Activated naive CD4-positive, alpha-beta T cell treated with anti-CD3 and anti-CD28 coated beads, Interleukin-2, amount 10 ng/mL, durations not matched to agents 7 days and 5 days (primary cell): ENCODE measurements at regions of chr11 and their contacts with region 1.

Region 1: DNA sequence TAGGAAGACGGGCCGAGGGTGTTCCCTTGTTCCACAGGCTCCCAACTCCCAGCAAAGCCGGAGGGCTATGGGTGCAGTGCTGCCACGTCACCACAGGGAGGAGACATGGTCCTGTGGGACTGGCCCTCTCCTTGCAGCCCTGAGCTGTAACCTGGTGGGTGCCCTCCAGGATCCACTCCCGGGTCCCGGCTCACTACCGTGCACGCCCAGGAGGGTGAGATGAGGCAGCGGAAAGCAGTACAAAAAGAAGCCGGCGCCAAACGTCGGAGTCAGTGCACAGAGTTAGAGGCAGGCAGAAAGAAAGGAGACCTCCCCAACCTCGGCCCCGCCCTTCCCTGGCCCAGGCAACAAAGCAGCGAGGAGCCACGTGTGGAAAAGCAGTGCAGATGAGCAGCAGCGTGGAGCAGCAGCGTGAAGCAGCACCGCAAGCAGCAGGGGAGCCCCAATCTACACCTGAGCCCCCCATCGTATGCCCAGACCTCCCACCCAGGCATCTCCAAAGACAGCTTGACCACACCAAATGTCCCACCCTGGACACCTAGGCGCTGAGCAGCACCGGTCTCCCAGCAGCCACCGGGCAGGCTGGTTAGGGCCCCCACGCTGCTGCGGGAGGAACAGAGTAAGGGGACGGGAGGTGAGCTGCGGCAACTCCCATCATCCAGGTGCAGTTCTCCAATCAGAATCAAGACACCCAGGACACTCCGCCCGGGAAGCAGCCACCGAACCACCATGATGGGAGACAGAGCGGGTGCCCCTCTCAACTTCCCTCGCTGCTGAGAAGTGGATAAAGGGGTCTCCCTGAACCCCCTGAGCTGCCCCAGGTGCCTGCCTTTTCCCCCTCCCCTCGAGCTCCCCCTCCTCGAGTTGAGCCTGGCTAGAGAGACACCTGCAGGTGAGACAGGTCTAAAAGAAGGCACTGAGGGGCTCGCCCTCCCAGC is 28.8 kb downstream of the IGSF9B start:
- DNase-seq: peak; percentile 85
- H3K4me3 Mint-ChIP-seq: peak overlapping the region; percentile 64
- H3K27ac Mint-ChIP-seq: peak overlapping the region; percentile 89
- H3K4me1 Mint-ChIP-seq: peaks cover 55% of the 10 kb centered on the region
- H3K27me3 Mint-ChIP-seq: no peaks in the 10 kb centered on the region

Region 2: GRCh38 chr11:133947321-133947756 is 19.4 kb after region 1 on chr11:
- CTCF ChIA-PET with region 1: interaction called, 31 read pairs
- DNase-seq: peak; percentile 86
- H3K4me3 Mint-ChIP-seq: peak overlapping the region; percentile 86
- H3K27ac Mint-ChIP-seq: peak overlapping the region; percentile 87
- H3K4me1 Mint-ChIP-seq: peaks cover 99% of the 10 kb centered on the region
- H3K27me3 Mint-ChIP-seq: no peaks in the 10 kb centered on the region

Region 3: GRCh38 chr11:134033696-134034491 is 105.9 kb after region 1 on chr11:
- CTCF ChIA-PET with region 1: interaction called, 13 read pairs
- DNase-seq: peak; percentile 88
- H3K4me3 Mint-ChIP-seq: peak overlapping the region; percentile 50
- H3K27ac Mint-ChIP-seq: peak overlapping the region; percentile 86
- H3K4me1 Mint-ChIP-seq: peaks cover 81% of the 10 kb centered on the region
- H3K27me3 Mint-ChIP-seq: peaks cover 40% of the 10 kb centered on the region

Region 4: GRCh38 chr11:134068829-134069425 is 141.0 kb after region 1 on chr11 and contains the start of gene JAM3:
- CTCF ChIA-PET with region 1: interaction called, 10 read pairs
- DNase-seq: peak; percentile 97
- H3K4me3 Mint-ChIP-seq: peak within 1 kb of the TSS; percentile 85
- H3K27ac Mint-ChIP-seq: no peak within 1 kb of the TSS
- H3K4me1 Mint-ChIP-seq: peaks cover 14% of the 10 kb centered on the region
- H3K27me3 Mint-ChIP-seq: peaks cover 76% of the 10 kb centered on the region

Region 5: DNA sequence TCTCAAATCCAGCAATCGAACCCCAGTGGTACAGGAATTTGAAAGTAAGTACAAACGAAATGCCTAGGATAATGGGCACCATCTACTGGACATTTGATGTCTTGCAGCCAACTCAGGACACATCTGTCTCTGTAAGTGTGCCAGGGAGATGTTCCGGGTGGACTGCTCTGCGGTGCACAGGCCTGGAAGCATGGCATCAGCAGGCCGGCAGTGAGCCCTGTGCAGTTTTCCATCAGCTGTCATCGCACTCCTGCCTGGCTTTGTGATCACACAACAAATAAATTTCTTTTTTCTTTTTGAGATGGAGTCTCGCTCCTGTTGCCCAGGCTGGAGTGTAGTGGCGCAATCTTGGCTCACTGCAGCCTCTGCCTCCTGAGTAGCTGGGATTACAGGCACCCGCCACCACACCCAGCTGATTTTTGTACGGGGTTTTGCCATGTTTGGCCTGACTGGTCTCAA is 211.9 kb after region 1 on chr11:
- CTCF ChIA-PET with region 1: interaction called, 20 read pairs
- DNase-seq: peak; percentile 69
- H3K4me3 Mint-ChIP-seq: no peak overlapping the region
- H3K27ac Mint-ChIP-seq: no peak overlapping the region
- H3K4me1 Mint-ChIP-seq: peaks cover 17% of the 10 kb centered on the region
- H3K27me3 Mint-ChIP-seq: no peaks in the 10 kb centered on the region